ENCODE measurements at regions of chr6 and their contacts with region 1.

Region 1: DNA sequence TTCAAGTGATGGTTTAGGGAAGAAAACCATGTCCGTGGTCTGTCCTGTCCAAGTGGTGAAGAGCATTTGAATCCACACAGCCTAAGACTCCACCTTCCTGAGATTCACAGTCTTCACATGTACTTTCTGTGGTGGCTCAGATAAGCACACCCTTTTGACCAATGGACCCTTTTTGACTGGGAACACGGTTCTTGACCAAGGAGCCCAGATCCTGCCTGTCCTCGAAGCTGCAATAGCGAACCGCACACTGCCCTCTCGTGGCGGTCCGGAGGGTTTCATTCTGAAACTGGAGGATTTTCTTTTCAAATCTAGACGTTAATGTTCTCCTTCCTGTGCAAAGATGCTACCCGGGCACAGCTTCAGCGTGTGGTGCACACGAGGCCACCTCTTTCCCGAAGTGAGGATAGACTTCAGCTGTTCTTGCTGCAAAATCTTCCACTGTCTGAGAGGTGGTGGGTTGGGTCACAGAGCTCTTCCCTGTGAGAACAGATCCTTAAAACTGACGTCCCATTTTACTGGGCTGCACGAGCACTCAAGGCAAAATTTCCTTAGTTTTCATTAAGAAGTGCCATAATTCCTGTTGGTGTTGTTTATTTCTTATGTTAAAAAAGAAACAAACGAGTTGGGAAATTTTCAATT is 90.5 kb downstream of the SYNJ2 start:
- DNase-seq: peak; percentile 68 to 83 (median 75)
- ATAC-seq: peak; percentile 38 to 70 (median 66)
- H3K4me3 ChIP-seq: no peak overlapping the region
- H3K27ac ChIP-seq: no peak overlapping the region
- H3K4me1 ChIP-seq: peaks cover 0 to 39% (median 8%) of the 10 kb centered on the region in 12 donors
- H3K27me3 ChIP-seq: no peaks in the 10 kb centered on the region
- CTCF ChIP-seq: peak; percentile 74 to 94 (median 86)
- POLR2A ChIP-seq: no peak

Region 2: DNA sequence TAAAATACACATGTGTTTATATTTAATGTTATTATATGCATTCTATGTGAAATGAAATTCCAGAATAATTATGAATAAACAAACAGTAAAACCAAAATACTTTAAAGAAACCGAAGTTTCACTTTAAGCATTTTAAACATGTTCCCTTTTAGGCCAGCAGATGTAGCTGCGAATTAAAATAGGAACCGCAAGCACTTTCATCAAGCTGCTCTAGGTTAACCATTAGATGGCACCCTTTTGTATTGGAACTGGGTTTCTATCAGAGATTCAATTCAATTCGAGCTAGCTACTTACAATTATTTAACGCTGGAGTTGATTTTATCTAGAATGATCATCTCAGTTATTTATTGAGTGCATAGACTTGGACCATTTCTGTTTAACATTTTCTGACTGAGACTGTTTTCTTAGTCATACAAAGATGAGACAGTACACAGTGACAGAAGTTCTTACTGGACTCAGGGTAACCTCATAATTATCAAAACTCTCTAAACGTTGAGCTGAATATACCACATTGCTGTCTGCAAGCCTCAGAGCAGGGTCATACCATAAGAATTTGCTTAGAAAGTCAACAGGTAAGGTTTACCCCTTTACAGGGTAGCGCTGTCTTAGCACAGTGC is 757.4 kb before region 1 on chr6:
- intact Hi-C with region 1: loop called in 2 of 10 experiments (anchors 10 kb)
- DNase-seq: no peak
- ATAC-seq: peak; percentile 50 to 77 (median 72)
- H3K4me3 ChIP-seq: no peak overlapping the region
- H3K27ac ChIP-seq: peak overlapping the region in 2 of 12 donors; percentile 6 to 27
- H3K4me1 ChIP-seq: peaks cover 0 to 31% (median 9%) of the 10 kb centered on the region in 12 donors
- H3K27me3 ChIP-seq: no peaks in the 10 kb centered on the region
- CTCF ChIP-seq: peak; percentile 69 to 92 (median 86)
- POLR2A ChIP-seq: no peak

Region 3: GRCh38 chr6:157756708-157757429 is 315.3 kb before region 1 on chr6:
- intact Hi-C with region 1: loop called in 8 of 10 experiments (anchors 2 to 10 kb)
- DNase-seq: peak; percentile 85 to 92 (median 87)
- ATAC-seq: peak; percentile 84 to 91 (median 88)
- H3K4me3 ChIP-seq: peak overlapping the region in 1 of 12 donors; percentile 4
- H3K27ac ChIP-seq: peak overlapping the region in 3 of 12 donors; percentile 8 to 48 (median 45)
- H3K4me1 ChIP-seq: peaks cover 0 to 42% (median 13%) of the 10 kb centered on the region in 12 donors
- H3K27me3 ChIP-seq: no peaks in the 10 kb centered on the region
- CTCF ChIP-seq: peak; percentile 77 to 88 (median 82)
- POLR2A ChIP-seq: no peak

Region 4: DNA sequence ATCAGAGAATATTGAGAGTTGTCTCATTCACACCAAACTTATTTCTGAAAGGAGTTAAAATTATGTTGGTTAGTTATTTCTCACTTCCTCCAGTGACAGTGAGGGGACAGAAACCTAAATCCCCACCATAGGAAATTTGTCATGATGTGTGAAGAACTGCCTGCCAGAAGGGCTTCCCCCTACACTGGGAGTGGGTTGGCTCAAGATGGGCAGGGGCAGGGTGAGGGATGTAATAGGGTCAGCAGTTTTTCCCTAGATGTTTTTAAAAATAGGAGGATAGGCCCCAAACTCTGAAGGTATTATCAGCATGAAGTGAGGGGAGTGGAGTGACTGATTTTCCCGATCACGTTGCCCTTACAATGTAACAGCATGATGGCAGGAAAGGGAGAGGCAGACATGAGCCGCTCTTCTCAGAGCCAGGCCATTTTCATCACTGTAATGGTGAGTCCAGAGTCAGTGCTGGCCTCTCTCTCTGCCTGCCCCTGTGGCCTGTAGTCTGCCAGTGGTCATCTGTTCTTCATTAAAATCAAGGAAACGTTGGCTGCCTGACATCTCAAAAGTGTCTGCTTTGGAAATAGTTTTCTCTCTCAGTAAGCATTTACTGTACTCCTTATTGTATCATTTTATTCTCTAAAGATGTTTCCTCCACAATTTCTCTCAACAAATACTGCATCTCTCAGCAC is 150.4 kb before region 1 on chr6:
- intact Hi-C with region 1: loop called in 1 of 10 experiments (anchors 10 kb)
- DNase-seq: peak in 3 of 5 donors; percentile 37 to 43 (median 38)
- ATAC-seq: peak in 3 of 4 donors; percentile 81 to 90 (median 89)
- H3K4me3 ChIP-seq: no peak overlapping the region
- H3K27ac ChIP-seq: peak overlapping the region in 4 of 12 donors; percentile 2 to 44 (median 22)
- H3K4me1 ChIP-seq: peaks cover 0 to 13% (median 2%) of the 10 kb centered on the region in 12 donors
- H3K27me3 ChIP-seq: no peaks in the 10 kb centered on the region
- CTCF ChIP-seq: no peak
- POLR2A ChIP-seq: no peak

Region 5: DNA sequence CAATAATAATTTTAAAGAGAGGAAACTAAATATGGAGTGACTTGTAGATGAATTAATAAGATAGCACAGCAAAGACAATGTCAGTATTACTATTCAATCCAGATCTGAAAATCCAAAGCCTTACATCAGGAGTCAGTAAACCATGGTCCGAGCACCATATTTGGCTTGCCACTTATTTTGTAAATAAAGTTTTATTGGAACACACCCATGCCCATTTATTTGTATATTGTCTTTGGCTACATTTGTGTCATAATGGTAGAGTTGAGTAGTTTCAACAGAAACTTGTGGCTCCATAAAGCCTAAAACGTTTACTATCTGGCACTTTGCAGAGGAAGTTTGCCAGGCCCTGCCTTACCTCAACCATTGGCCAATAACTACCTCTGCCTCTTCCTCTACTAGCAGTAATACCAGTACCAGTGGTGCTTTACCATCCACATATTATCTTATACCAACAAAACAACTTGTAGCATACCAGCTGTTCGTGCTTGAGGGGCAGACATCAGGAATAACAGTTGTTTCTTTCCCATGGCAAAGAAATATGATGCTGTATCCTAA is 142.4 kb before region 1 on chr6:
- intact Hi-C with region 1: loop called in 3 of 10 experiments (anchors 10 kb)
- DNase-seq: no peak
- ATAC-seq: no peak
- H3K4me3 ChIP-seq: no peak overlapping the region
- H3K27ac ChIP-seq: no peak overlapping the region
- H3K4me1 ChIP-seq: no peaks in the 10 kb centered on the region
- H3K27me3 ChIP-seq: no peaks in the 10 kb centered on the region
- CTCF ChIP-seq: no peak
- POLR2A ChIP-seq: no peak

Region 6: GRCh38 chr6:157981395-157982296 is 90.6 kb before region 1 on chr6 and contains the start of gene SYNJ2:
- intact Hi-C with region 1: loop called in 9 of 10 experiments (anchors 1 to 5 kb)
- DNase-seq: peak; percentile 80 to 89 (median 86)
- ATAC-seq: peak; percentile 59 to 92 (median 88)
- H3K4me3 ChIP-seq: peak within 1 kb of the TSS; percentile 63 to 100 (median 94)
- H3K27ac ChIP-seq: peak within 1 kb of the TSS in 11 of 12 donors; percentile 63 to 92 (median 78)
- H3K4me1 ChIP-seq: peaks cover 0 to 48% (median 12%) of the 10 kb centered on the region in 12 donors
- H3K27me3 ChIP-seq: no peaks in the 10 kb centered on the region
- CTCF ChIP-seq: peak in 11 of 12 donors; percentile 8 to 79 (median 54)
- POLR2A ChIP-seq: peak in 1 of 2 donors; percentile 54
- total RNA-seq, gene SYNJ2: 7.5 to 27.0 (median 18.2) TPM

Region 7: DNA sequence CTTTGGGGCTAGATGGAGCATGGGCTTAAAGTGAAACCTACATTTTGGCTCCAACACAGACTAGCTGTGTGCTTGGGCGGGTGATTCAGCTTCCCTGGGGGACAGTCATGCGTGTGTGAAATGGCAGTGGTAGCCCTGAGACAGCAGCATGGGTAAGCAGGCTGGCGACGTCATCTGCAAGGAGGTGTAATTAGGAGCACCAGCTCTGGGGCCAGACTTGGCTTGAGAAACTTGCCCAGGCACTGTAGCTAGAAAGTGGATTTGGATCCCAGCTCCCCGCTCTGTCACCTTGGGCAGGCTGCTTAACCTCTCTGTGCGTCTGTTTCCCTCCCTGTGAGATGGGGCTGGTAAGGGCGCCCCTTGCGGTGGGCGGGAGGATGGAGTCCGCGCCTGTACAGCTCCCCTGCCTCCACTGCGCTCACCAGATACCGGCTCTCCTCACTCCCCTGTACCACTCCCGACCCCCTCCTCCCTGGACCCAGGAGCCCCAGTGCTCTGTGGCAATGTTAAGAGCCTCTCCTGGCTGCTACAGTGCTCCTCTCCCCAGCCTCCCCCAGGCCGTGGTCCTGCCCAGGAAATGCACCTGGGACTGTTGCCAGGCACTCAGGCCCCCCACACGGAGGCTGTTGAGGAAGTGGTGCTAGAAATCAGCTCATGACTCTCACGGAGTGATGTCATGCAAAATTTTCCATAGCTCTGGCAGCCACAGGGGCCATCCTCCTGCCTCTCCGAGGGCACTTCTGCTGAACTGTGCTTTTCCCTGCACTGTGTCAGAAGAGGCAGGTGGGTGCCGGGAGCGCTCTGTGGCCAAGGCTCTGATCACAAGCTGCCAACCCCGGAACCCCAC is 45.9 kb before region 1 on chr6:
- intact Hi-C with region 1: loop called in 2 of 10 experiments (anchors 5 kb)
- DNase-seq: peak; percentile 85 to 92 (median 90)
- ATAC-seq: peak; percentile 68 to 88 (median 82)
- H3K4me3 ChIP-seq: peak overlapping the region in 10 of 12 donors; percentile 8 to 38 (median 21)
- H3K27ac ChIP-seq: peak overlapping the region; percentile 9 to 91 (median 78)
- H3K4me1 ChIP-seq: peaks cover 5 to 56% (median 36%) of the 10 kb centered on the region in 12 donors
- H3K27me3 ChIP-seq: no peaks in the 10 kb centered on the region
- CTCF ChIP-seq: peak; percentile 40 to 70 (median 56)
- POLR2A ChIP-seq: no peak